Activated B cell treated with CpG ODN at 0.5 μM for 24 hours (primary cell): ENCODE measurements at regions of chr9 and their contacts with region 1.

Region 1: GRCh38 chr9:105541838-105542237 is 16.1 kb upstream of the FKTN start:
- DNase-seq: no peak
- ATAC-seq: peak; percentile 95
- H3K4me3 Mint-ChIP-seq: no peak overlapping the region
- H3K27ac Mint-ChIP-seq: no peak overlapping the region
- H3K4me1 Mint-ChIP-seq: peaks cover 12% of the 10 kb centered on the region
- H3K27me3 Mint-ChIP-seq: no peaks in the 10 kb centered on the region
- CTCF ChIP-seq: no peak

Region 2: GRCh38 chr9:104093647-104094533 is 1447.9 kb before region 1 on chr9 and contains the start of gene SMC2:
- CTCF ChIA-PET with region 1: no interaction called
- POLR2A ChIA-PET with region 1: no interaction called
- intact Hi-C with region 1: loop called (anchors 5 kb)
- DNase-seq: peak; percentile 90
- ATAC-seq: peak; percentile 97
- H3K4me3 Mint-ChIP-seq: peak within 1 kb of the TSS; percentile 99
- H3K27ac Mint-ChIP-seq: peak within 1 kb of the TSS; percentile 99
- H3K4me1 Mint-ChIP-seq: peaks cover 31% of the 10 kb centered on the region
- H3K27me3 Mint-ChIP-seq: no peaks in the 10 kb centered on the region
- CTCF ChIP-seq: no peak
- total RNA-seq, gene SMC2: 12.5 and 13.5 TPM in 2 replicates

Region 3: GRCh38 chr9:105447814-105448812 is 93.7 kb before region 1 on chr9 and contains the start of gene FSD1L:
- CTCF ChIA-PET with region 1: no interaction called
- POLR2A ChIA-PET with region 1: no interaction called
- intact Hi-C with region 1: loop called (anchors 2 kb)
- DNase-seq: peak; percentile 89
- ATAC-seq: peak; percentile 92
- H3K4me3 Mint-ChIP-seq: peak within 1 kb of the TSS; percentile 90
- H3K27ac Mint-ChIP-seq: peak within 1 kb of the TSS; percentile 75
- H3K4me1 Mint-ChIP-seq: peaks cover 17% of the 10 kb centered on the region
- H3K27me3 Mint-ChIP-seq: no peaks in the 10 kb centered on the region
- CTCF ChIP-seq: no peak
- total RNA-seq, gene FSD1L: 10.2 and 12.4 TPM in 2 replicates

Region 4: DNA sequence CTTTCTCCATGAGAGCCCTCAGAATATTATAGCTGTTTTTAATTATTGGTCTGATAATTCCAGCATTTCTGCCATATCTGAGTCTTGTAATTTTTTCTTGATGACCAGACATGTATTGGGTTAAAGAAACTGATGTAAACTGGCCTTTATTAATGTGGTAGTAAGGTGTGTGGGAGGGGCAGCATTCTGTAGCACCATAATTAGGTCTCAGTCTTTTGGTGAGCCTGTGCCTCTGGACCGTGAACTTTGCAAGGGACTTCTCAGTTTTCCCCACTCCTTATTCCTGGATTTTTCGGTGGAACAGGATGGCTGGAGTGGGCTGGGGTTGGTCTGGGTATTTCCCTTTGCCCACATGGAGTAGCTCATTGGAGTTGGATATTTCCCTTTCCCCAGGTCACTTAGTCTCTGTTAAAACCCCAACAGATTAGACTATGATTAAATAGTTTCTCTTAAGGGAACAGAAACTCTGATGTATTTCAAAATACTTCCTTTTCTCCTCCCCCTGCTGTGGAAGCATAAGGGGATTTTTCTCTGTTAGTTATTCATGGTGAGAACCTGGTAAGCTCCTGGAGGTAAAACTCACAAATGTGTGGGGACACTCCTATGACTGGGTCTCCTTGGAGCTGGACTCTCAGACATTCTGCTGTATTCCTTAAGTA is 41.6 kb before region 1 on chr9:
- CTCF ChIA-PET with region 1: no interaction called
- POLR2A ChIA-PET with region 1: no interaction called
- intact Hi-C with region 1: loop called (anchors 2 kb)
- DNase-seq: peak; percentile 34
- ATAC-seq: peak; percentile 88
- H3K4me3 Mint-ChIP-seq: peak overlapping the region; percentile 78
- H3K27ac Mint-ChIP-seq: peak overlapping the region; percentile 96
- H3K4me1 Mint-ChIP-seq: peaks cover 26% of the 10 kb centered on the region
- H3K27me3 Mint-ChIP-seq: no peaks in the 10 kb centered on the region
- CTCF ChIP-seq: no peak

Region 5: GRCh38 chr9:105557771-105558610 is 16.2 kb after region 1 on chr9 and contains the start of gene FKTN:
- CTCF ChIA-PET with region 1: no interaction called
- POLR2A ChIA-PET with region 1: no interaction called
- intact Hi-C with region 1: loop called (anchors 1 kb)
- DNase-seq: peak; percentile 72
- ATAC-seq: peak; percentile 99
- H3K4me3 Mint-ChIP-seq: peak within 1 kb of the TSS; percentile 96
- H3K27ac Mint-ChIP-seq: peak within 1 kb of the TSS; percentile 83
- H3K4me1 Mint-ChIP-seq: peaks cover 20% of the 10 kb centered on the region
- H3K27me3 Mint-ChIP-seq: no peaks in the 10 kb centered on the region
- CTCF ChIP-seq: no peak
- total RNA-seq, gene FKTN: 16.8 and 17.5 TPM in 2 replicates

Region 6: GRCh38 chr9:105572455-105572854 is 30.6 kb after region 1 on chr9:
- CTCF ChIA-PET with region 1: no interaction called
- POLR2A ChIA-PET with region 1: no interaction called
- intact Hi-C with region 1: no loop called
- DNase-seq: no peak
- ATAC-seq: no peak
- H3K4me3 Mint-ChIP-seq: no peak overlapping the region
- H3K27ac Mint-ChIP-seq: no peak overlapping the region
- H3K4me1 Mint-ChIP-seq: no peaks in the 10 kb centered on the region
- H3K27me3 Mint-ChIP-seq: no peaks in the 10 kb centered on the region
- CTCF ChIP-seq: no peak